ENCODE measurements at regions of chr14 and their contacts with region 1.

Region 1: GRCh38 chr14:20613094-20614037 is 22.2 kb upstream of the RNASE12 start:
- DNase-seq: peak; percentile 61 to 95 (median 92)
- ATAC-seq: peak; percentile 89
- H3K4me3 ChIP-seq: peak overlapping the region; percentile 64
- H3K4me3 Mint-ChIP-seq: no peak overlapping the region
- H3K27ac ChIP-seq: peak overlapping the region; percentile 30
- H3K27ac Mint-ChIP-seq: no peak overlapping the region
- H3K4me1 ChIP-seq: peaks cover 20 to 29% of the 10 kb centered on the region in 2 donors
- H3K4me1 Mint-ChIP-seq: peaks cover 0 to 26% (median 4%) of the 10 kb centered on the region in 7 donors
- H3K27me3 ChIP-seq: no peaks in the 10 kb centered on the region
- H3K27me3 Mint-ChIP-seq: peaks cover 0 to 6% (median 0%) of the 10 kb centered on the region in 5 donors

Region 2: DNA sequence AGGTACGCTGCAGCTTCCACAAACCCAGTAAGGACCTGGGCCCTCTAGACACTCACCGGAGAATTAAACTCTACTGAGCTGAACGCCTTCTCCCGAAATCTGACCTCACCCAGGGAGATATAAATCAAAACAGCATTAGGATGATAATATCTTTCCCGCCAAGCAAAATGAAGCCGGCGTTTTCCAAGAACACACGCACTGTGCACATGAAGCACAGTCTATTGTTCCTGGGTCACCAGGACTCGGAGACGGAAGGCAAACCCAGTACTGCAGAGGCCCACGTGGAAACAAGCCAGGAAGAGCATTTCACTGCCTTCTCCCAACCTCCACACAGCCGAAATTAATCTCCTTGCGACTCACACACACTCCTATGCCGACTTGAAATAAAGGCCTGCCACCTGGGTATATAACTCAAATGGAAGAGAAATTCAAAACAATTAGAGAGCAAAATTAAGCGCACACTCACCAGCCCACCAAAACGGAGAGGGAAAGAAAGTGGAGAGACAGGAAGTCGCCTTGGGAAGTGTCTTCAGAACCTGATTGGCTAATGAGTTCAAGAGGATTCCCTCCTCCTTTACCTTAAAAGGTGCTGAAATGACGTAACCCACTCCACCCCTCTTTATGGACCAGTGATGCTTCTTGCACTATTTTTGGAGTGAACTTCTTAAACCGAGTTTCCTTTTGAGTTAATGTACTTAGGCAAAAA is 280.4 kb before region 1 on chr14 and contains the start of gene CCNB1IP1:
- CTCF ChIA-PET with region 1: interaction called, 104 read pairs
- POLR2A ChIA-PET with region 1: interaction called, 26 read pairs
- intact Hi-C with region 1: loop called in 1 of 2 experiments (anchors 1 kb)
- DNase-seq: peak; percentile 11 to 80 (median 64)
- ATAC-seq: peak; percentile 99
- H3K4me3 ChIP-seq: peak within 1 kb of the TSS; percentile 97
- H3K4me3 Mint-ChIP-seq: peak within 1 kb of the TSS; percentile 85 to 100 (median 96)
- H3K27ac ChIP-seq: peak within 1 kb of the TSS; percentile 62
- H3K27ac Mint-ChIP-seq: peak within 1 kb of the TSS; percentile 67 to 96 (median 92)
- H3K4me1 ChIP-seq: no peaks in the 10 kb centered on the region
- H3K4me1 Mint-ChIP-seq: peaks cover 12 to 49% (median 34%) of the 10 kb centered on the region in 7 donors
- H3K27me3 ChIP-seq: no peaks in the 10 kb centered on the region
- H3K27me3 Mint-ChIP-seq: peaks cover 0 to 4% (median 0%) of the 10 kb centered on the region in 5 donors
- total RNA-seq, gene CCNB1IP1: 19.1 to 29.8 (median 28.7) TPM

Region 3: DNA sequence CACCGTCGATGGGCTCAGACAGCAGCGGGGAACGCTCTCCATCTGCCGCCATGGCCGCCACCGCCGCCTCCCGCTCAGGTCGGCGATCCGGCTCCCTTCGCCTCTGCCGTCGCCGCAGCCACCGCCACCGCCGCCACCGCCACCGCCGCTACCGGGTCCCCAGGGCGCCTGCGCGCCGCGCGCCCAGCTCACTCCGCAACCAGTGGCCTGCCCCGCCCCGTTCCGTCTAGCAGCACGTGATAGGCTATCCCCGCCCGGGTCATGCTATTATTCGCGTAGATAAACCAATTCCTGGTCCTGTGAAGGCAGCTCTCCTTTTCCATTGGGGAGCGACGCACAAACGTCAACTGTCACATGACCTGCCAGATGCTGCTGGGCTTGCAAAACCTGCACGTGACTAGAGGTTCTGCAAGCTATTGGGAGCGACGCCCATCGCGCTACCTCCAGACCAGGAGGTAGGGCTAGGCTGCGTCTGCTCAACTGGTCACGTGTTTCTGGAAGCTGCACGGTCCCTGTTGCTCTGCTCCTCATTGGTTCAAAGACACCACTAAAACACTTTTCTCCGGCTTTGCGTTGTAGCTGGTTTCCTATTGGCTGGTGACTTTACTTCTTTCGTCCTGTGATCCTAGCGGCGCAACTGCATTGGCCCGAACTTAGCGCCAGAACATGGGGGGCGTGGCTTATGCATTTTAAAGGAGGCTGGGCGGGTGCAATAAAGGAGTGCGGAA is 151.9 kb before region 1 on chr14 and contains the start of gene PIP4P1:
- CTCF ChIA-PET with region 1: interaction called, 3 read pairs
- POLR2A ChIA-PET with region 1: interaction called, 14 read pairs
- intact Hi-C with region 1: loop called in 1 of 2 experiments (anchors 1 kb)
- DNase-seq: peak; percentile 95 to 100 (median 99)
- ATAC-seq: peak; percentile 92
- H3K4me3 ChIP-seq: peak within 1 kb of the TSS; percentile 83
- H3K4me3 Mint-ChIP-seq: peak within 1 kb of the TSS; percentile 81 to 97 (median 92)
- H3K27ac ChIP-seq: peak within 1 kb of the TSS; percentile 96
- H3K27ac Mint-ChIP-seq: peak within 1 kb of the TSS; percentile 88 to 99 (median 92)
- H3K4me1 ChIP-seq: peaks cover 20 to 21% of the 10 kb centered on the region in 2 donors
- H3K4me1 Mint-ChIP-seq: peaks cover 18 to 36% (median 32%) of the 10 kb centered on the region in 7 donors
- H3K27me3 ChIP-seq: no peaks in the 10 kb centered on the region
- H3K27me3 Mint-ChIP-seq: peaks cover 0 to 2% (median 0%) of the 10 kb centered on the region in 5 donors
- total RNA-seq, gene PIP4P1: 34.9 to 87.1 (median 74.2) TPM

Region 4: DNA sequence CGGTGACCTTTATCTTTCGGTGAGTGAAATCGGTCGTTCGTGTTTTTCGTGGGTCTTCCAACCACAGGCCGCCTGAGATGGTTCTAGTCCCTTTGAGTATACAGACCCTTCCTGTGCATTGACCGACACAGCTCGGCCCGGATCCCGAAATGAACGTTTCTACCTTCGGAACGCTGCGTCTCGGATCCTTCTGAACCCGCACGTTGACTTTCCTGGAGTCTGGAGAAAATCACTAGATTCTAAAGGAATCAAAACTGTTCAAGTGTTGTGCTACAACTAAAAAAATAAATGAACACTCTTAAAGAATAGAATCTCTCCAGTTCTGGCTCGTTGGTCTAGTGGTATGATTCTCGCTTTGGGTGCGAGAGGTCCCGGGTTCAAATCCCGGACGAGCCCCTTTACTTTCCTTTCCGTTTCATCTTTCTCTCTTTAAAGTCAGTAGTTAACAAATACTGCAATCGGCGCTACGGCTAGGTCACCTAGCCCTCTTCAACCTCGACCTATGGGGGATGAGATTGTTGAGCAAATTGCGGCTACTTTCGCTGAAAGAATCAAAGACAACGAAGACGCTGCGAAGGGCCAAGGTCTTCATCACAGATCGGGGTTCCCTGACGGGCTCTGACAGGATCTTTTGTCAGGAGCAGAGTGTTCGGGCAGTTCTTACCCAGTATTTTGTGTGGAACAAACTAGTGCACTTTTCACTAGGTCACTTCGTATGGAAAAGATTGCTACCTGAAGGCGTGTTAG is 19.5 kb after region 1 on chr14:
- CTCF ChIA-PET with region 1: interaction called, 7 read pairs
- POLR2A ChIA-PET with region 1: interaction called, 6 read pairs
- intact Hi-C with region 1: loop called (anchors 1 kb)
- DNase-seq: peak in 8 of 9 donors; percentile 45 to 80 (median 64)
- ATAC-seq: peak; percentile 70
- H3K4me3 ChIP-seq: peak overlapping the region; percentile 51
- H3K4me3 Mint-ChIP-seq: peak overlapping the region; percentile 74 to 93 (median 88)
- H3K27ac ChIP-seq: no peak overlapping the region
- H3K27ac Mint-ChIP-seq: peak overlapping the region; percentile 77 to 98 (median 88)
- H3K4me1 ChIP-seq: peaks cover 0 to 11% of the 10 kb centered on the region in 2 donors
- H3K4me1 Mint-ChIP-seq: peaks cover 17 to 59% (median 45%) of the 10 kb centered on the region in 7 donors
- H3K27me3 ChIP-seq: no peaks in the 10 kb centered on the region
- H3K27me3 Mint-ChIP-seq: peaks cover 26 to 82% (median 35%) of the 10 kb centered on the region in 5 donors

Region 5: GRCh38 chr14:20690848-20691523 is 77.6 kb after region 1 on chr14:
- CTCF ChIA-PET with region 1: interaction called, 16 read pairs
- POLR2A ChIA-PET with region 1: interaction called, 6 read pairs
- intact Hi-C with region 1: loop called (anchors 1 kb)
- DNase-seq: peak in 7 of 9 donors; percentile 48 to 69 (median 63)
- ATAC-seq: peak; percentile 97
- H3K4me3 ChIP-seq: no peak overlapping the region
- H3K4me3 Mint-ChIP-seq: no peak overlapping the region
- H3K27ac ChIP-seq: no peak overlapping the region
- H3K27ac Mint-ChIP-seq: peak overlapping the region in 1 of 9 donors; percentile 32
- H3K4me1 ChIP-seq: no peaks in the 10 kb centered on the region
- H3K4me1 Mint-ChIP-seq: peaks cover 0 to 16% (median 6%) of the 10 kb centered on the region in 7 donors
- H3K27me3 ChIP-seq: no peaks in the 10 kb centered on the region
- H3K27me3 Mint-ChIP-seq: no peaks in the 10 kb centered on the region

Region 6: DNA sequence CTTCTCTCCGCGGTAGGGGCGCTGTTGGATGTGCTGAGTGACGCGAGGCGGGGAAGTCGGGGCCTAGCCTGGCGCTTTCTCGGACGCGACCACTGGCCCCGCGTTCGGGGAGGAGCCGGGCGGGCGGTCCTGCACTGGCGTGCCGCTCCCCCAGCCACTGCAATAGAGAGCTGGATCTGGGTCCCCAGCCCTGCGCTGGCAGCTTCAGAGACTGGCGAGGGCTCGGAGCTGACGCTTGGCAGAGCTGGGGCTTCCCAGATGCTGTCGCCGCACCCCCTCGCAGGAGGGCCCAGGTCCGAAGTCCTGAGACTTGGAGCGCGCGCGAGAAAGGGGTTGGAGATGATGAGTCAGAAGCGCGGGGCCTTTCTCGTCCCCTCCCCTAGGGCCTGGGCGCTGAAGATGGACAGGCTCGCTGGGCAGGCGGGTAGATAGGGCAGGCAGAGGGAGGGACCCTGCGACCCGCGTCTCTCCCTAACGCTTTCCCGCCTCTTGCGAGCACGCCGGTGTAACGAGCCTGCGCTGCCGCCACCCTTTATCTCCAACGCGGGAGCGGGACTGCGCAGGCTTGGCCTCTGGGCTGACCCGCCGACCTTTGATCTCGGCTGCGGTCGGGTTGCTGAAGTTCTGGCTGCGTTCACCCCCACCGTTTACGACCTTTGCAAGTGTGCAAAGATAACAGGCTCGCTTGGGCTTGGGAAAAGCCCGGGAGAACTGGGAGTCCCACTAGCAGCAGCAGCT is 490.5 kb after region 1 on chr14:
- CTCF ChIA-PET with region 1: no interaction called
- POLR2A ChIA-PET with region 1: no interaction called
- intact Hi-C with region 1: loop called in 1 of 2 experiments (anchors 1 kb)
- DNase-seq: peak; percentile 87 to 94 (median 92)
- ATAC-seq: peak; percentile 92
- H3K4me3 ChIP-seq: peak overlapping the region; percentile 94
- H3K4me3 Mint-ChIP-seq: peak overlapping the region; percentile 74 to 99 (median 91)
- H3K27ac ChIP-seq: peak overlapping the region; percentile 96
- H3K27ac Mint-ChIP-seq: peak overlapping the region; percentile 25 to 97 (median 89)
- H3K4me1 ChIP-seq: peaks cover 3 to 8% of the 10 kb centered on the region in 2 donors
- H3K4me1 Mint-ChIP-seq: peaks cover 23 to 41% (median 26%) of the 10 kb centered on the region in 7 donors
- H3K27me3 ChIP-seq: peaks cover 0 to 4% of the 10 kb centered on the region in 2 donors
- H3K27me3 Mint-ChIP-seq: peaks cover 0 to 11% (median 0%) of the 10 kb centered on the region in 5 donors